H1 (cell line): ENCODE measurements at regions of chr15 and their contacts with region 1.

Region 1: GRCh38 chr15:75723847-75724660 is 11.4 kb upstream of the CSPG4 start:
- DNase-seq: no peak
- H3K4me3 ChIP-seq: no peak overlapping the region
- H3K27ac ChIP-seq: no peak overlapping the region
- H3K4me1 ChIP-seq: no peaks in the 10 kb centered on the region; a peak in 1 of 7 replicates
- H3K27me3 ChIP-seq: no peaks in the 10 kb centered on the region; a peak in 3 of 7 replicates
- CTCF ChIP-seq: no peak
- EP300 ChIP-seq: no peak
- POLR2A ChIP-seq: no peak
- RAD21 ChIP-seq: no peak

Region 2: DNA sequence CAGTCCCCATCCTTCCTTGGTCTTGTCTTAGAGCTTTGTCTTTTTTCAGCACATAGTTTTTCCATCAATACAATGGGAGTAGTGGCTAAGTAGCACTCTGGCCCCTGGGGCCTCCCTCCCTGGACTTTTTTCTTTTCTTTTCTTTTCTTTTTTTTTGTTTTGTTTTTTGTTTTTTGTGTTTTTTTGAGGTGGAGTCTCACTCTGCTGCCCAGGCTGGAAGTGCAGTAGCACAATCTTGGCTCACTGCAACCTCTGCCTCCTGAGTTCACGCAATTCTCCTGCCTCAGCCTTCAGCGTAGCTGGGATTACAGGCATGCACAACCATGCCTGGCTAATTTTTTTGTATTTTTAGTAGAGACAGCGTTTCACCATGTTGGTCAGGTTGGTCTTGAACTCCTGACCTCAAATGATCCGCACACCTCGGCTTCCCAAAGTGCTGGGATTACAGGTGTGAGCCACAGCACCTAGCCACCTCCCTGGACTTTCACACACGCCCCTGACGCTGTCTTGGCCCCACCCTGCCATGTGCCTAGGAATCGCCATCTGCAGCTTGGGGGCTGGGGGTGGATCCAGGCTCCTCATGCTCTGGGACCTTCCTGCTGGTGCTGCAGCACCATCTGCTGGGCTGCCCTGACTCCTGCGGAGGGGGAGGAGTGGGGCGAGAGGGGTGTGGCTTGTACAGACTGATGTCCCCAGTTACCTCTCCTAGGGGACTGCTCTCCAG is 519.6 kb before region 1 on chr15:
- CTCF ChIA-PET with region 1: no interaction called
- POLR2A ChIA-PET with region 1: no interaction called
- DNase-seq: peak; percentile 87 to 89
- H3K4me3 ChIP-seq: peak overlapping the region in 2 of 4 experiments; percentile 11 to 15; a peak in 1 of 8 replicates
- H3K27ac ChIP-seq: no peak overlapping the region
- H3K4me1 ChIP-seq: peaks cover 0 to 35% (median 19%) of the 10 kb centered on the region in 4 experiments; a peak in 6 of 7 replicates
- H3K27me3 ChIP-seq: peaks cover 0 to 6% (median 2%) of the 10 kb centered on the region in 4 experiments; a peak in 1 of 7 replicates
- CTCF ChIP-seq: peak in 2 of 3 experiments; percentile 96 to 98; a peak in 3 of 4 replicates
- EP300 ChIP-seq: peak in 1 of 2 experiments; percentile 90; a peak in 1 of 3 replicates
- POLR2A ChIP-seq: no peak
- RAD21 ChIP-seq: peak; percentile 100

Region 3: GRCh38 chr15:75712668-75713337 is 11.3 kb before region 1 on chr15 and contains the start of gene CSPG4:
- CTCF ChIA-PET with region 1: interaction called, 29 read pairs
- POLR2A ChIA-PET with region 1: interaction called, 3 read pairs
- DNase-seq: peak in 1 of 2 experiments; percentile 72
- H3K4me3 ChIP-seq: peak within 1 kb of the TSS; percentile 52 to 65 (median 56)
- H3K27ac ChIP-seq: no peak within 1 kb of the TSS
- H3K4me1 ChIP-seq: peaks cover 0 to 11% (median 10%) of the 10 kb centered on the region in 4 experiments; a peak in 6 of 7 replicates
- H3K27me3 ChIP-seq: peaks cover 0 to 21% (median 6%) of the 10 kb centered on the region in 4 experiments; a peak in 3 of 7 replicates
- CTCF ChIP-seq: no peak
- EP300 ChIP-seq: no peak
- POLR2A ChIP-seq: no peak
- RAD21 ChIP-seq: no peak
- total RNA-seq, gene CSPG4: 3.0 and 3.2 TPM in 2 replicates

Region 4: GRCh38 chr15:75921729-75922703 is 198.0 kb after region 1 on chr15:
- CTCF ChIA-PET with region 1: interaction called, 13 read pairs
- POLR2A ChIA-PET with region 1: no interaction called
- DNase-seq: no peak
- H3K4me3 ChIP-seq: no peak overlapping the region
- H3K27ac ChIP-seq: no peak overlapping the region
- H3K4me1 ChIP-seq: peaks cover 0 to 8% (median 1%) of the 10 kb centered on the region in 4 experiments; a peak in 1 of 7 replicates
- H3K27me3 ChIP-seq: no peaks in the 10 kb centered on the region
- CTCF ChIP-seq: peak in 2 of 3 experiments; percentile 56 to 60; a peak in 3 of 4 replicates
- EP300 ChIP-seq: no peak
- POLR2A ChIP-seq: no peak
- RAD21 ChIP-seq: peak; percentile 80 to 84